ENCODE measurements at regions of chr3 and their contacts with region 1.

Region 1: DNA sequence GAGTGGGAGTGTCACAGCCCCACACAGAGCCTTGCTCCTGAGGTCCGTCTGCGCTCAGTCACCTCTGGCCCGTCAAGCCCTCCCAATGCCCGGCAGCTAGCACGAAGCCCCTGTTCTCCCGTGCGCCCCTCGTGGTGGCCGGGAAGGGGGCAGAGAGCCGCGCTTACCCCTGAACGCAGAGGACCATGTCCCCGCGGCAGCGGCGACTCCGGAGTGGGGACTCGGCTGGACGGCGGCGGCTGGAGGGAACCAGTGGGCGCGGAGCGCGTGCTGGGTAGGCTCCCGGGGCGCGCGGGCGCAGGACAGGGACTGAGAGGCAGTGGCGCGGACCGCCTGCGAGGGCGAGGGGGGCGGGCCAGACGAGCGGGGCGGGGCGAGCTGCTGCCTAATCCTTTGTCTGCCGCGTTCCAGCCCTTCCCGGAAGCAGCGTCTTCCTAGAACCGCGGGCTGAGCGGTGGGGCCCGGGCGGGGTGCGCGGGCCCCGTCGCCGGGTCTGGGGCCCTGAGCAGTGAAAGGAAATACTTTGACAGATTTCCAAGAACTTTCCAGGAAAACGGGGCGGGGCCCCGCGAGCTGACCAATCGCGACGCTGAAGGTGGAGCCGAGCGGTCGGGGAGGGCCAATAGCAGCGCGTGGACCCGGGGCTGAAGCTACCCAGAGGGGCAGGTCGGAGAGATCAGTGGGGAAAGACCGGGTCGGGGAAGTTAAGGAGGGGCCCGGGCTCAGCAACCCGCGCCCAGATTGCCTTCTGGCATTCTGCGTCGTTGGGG is at the start of gene CISH:
- DNase-seq: peak; percentile 100
- H3K4me3 Mint-ChIP-seq: peak within 1 kb of the TSS; percentile 93
- H3K27ac Mint-ChIP-seq: peak within 1 kb of the TSS; percentile 98
- H3K4me1 Mint-ChIP-seq: peaks cover 37% of the 10 kb centered on the region
- H3K27me3 Mint-ChIP-seq: no peaks in the 10 kb centered on the region
- total RNA-seq, gene CISH: 359 and 361 TPM in 2 replicates

Region 2: DNA sequence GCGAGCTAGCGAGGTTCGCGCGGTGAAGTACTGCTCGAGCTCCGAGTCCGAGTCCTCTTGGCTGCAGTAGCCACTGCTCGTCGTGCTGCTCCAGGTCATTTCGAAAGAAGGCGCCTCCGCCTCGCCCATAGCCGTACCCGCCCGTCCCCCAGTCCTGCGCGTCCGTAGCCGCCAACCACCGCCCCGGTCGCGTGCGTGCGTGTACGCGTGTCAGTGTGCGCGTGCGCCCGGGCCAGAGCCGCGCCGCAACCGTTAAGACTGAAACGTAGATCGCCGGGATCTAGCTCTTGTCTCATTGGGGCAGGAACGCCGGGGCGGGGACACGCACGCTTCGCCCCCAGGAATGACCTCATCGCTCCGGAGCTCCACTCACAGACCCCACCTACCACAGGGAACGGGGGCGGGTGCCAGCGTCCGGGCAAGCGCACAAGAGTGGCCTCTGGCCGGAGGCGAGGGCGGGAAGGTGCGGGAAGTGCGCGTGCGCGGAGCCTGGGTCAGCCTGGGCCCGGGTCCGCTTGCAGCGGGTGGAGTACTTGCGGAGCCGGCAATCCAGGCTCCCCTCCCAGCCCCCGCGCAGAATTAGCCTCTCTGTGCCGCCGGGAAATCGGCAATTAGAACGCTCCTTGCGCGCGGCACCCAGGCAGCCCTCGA is 274.3 kb before region 1 on chr3:
- intact Hi-C with region 1: loop called (anchors 5 kb)
- DNase-seq: peak; percentile 99
- H3K4me3 Mint-ChIP-seq: peak overlapping the region; percentile 85
- H3K27ac Mint-ChIP-seq: peak overlapping the region; percentile 99
- H3K4me1 Mint-ChIP-seq: peaks cover 54% of the 10 kb centered on the region
- H3K27me3 Mint-ChIP-seq: no peaks in the 10 kb centered on the region

Region 3: GRCh38 chr3:50587806-50588758 is 23.6 kb before region 1 on chr3:
- intact Hi-C with region 1: loop called (anchors 1 kb)
- DNase-seq: peak; percentile 89
- H3K4me3 Mint-ChIP-seq: peak overlapping the region; percentile 72
- H3K27ac Mint-ChIP-seq: peak overlapping the region; percentile 95
- H3K4me1 Mint-ChIP-seq: peaks cover 79% of the 10 kb centered on the region
- H3K27me3 Mint-ChIP-seq: no peaks in the 10 kb centered on the region

Region 4: DNA sequence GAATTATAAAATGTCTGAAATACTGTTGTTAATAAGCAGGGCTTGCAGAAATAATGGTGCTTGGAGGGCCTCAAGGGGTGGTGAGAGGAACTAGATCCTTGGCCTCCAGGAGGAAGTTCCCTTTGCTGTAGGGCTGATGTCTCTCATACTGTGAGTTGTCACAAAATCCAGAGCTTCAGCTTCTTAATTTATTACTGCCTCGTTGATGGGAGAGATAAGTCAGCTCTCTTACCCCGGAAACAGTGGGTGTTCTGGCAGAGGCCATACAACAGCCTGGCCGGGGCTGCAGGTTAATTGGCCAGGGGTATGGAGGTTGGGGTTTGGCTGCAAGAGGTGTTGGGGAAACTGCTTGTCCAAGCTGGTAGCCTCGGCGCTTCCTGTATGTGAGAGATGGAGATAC is 20.8 kb after region 1 on chr3:
- intact Hi-C with region 1: loop called (anchors 2 kb)
- DNase-seq: peak; percentile 67
- H3K4me3 Mint-ChIP-seq: peak overlapping the region; percentile 75
- H3K27ac Mint-ChIP-seq: peak overlapping the region; percentile 86
- H3K4me1 Mint-ChIP-seq: peaks cover 82% of the 10 kb centered on the region
- H3K27me3 Mint-ChIP-seq: no peaks in the 10 kb centered on the region

Region 5: DNA sequence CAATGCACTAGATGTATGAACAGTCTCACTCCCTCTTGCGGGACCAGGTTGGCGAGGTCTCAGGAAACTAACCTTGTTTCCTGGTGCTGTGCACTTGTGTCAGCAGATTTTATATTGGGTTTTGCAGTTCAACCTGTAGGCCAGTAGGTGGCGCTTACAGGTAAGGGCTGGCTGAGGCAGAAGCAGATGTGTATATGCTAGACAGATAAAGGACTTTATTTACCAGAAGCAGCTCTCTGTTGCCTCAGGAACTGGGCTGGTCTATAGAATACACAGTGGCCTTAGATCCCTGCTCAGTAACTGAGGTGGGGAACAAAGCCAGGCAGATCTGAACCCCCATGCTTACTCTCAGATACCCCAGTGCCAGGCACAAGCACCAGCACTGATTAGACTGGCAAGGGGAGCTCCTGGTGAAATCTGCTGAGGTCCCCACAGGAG is 359.9 kb after region 1 on chr3:
- intact Hi-C with region 1: loop called (anchors 5 kb)
- DNase-seq: peak; percentile 89
- H3K4me3 Mint-ChIP-seq: no peak overlapping the region
- H3K27ac Mint-ChIP-seq: no peak overlapping the region
- H3K4me1 Mint-ChIP-seq: peaks cover 12% of the 10 kb centered on the region
- H3K27me3 Mint-ChIP-seq: peaks cover 3% of the 10 kb centered on the region

Measured in activated CD4-positive, alpha-beta T cell treated with anti-CD3 and anti-CD28 coated beads, Interleukin-2, amount 10 ng/mL, durations not matched to agents 24 days and 14 days (primary cell).